B cell (primary cell): ENCODE measurements at regions of chr12 and their contacts with region 1.

Region 1: GRCh38 chr12:26274441-26275312 is 79.3 kb downstream of the SSPN start:
- DNase-seq: peak; percentile 58
- ATAC-seq: peak; percentile 96
- H3K4me3 ChIP-seq: no peak overlapping the region
- H3K4me3 Mint-ChIP-seq: peak overlapping the region; percentile 18
- H3K27ac ChIP-seq: no peak overlapping the region
- H3K27ac Mint-ChIP-seq: peak overlapping the region; percentile 78
- H3K4me1 ChIP-seq: peaks cover 16 to 28% of the 10 kb centered on the region in 2 donors
- H3K4me1 Mint-ChIP-seq: peaks cover 43% of the 10 kb centered on the region
- H3K27me3 ChIP-seq: no peaks in the 10 kb centered on the region
- H3K27me3 Mint-ChIP-seq: no peaks in the 10 kb centered on the region
- CTCF ChIP-seq: no peak

Region 2: GRCh38 chr12:26113853-26114719 is 160.6 kb before region 1 on chr12:
- CTCF ChIA-PET with region 1: interaction called, 12 read pairs
- POLR2A ChIA-PET with region 1: interaction called, 3 read pairs
- intact Hi-C with region 1: loop called (anchors 1 kb)
- DNase-seq: peak; percentile 94
- ATAC-seq: peak; percentile 80
- H3K4me3 ChIP-seq: peak overlapping the region in 4 of 5 experiments; percentile 67 to 80 (median 70)
- H3K4me3 Mint-ChIP-seq: peak overlapping the region; percentile 87
- H3K27ac ChIP-seq: peak overlapping the region; percentile 91 to 95
- H3K27ac Mint-ChIP-seq: peak overlapping the region; percentile 75
- H3K4me1 ChIP-seq: peaks cover 36 to 47% of the 10 kb centered on the region in 2 donors
- H3K4me1 Mint-ChIP-seq: peaks cover 49% of the 10 kb centered on the region
- H3K27me3 ChIP-seq: no peaks in the 10 kb centered on the region
- H3K27me3 Mint-ChIP-seq: no peaks in the 10 kb centered on the region
- CTCF ChIP-seq: peak; percentile 48

Region 3: GRCh38 chr12:26204612-26205289 is 69.9 kb before region 1 on chr12:
- CTCF ChIA-PET with region 1: no interaction called
- POLR2A ChIA-PET with region 1: no interaction called
- intact Hi-C with region 1: no loop called
- DNase-seq: no peak
- ATAC-seq: no peak
- H3K4me3 ChIP-seq: no peak overlapping the region
- H3K4me3 Mint-ChIP-seq: no peak overlapping the region
- H3K27ac ChIP-seq: no peak overlapping the region
- H3K27ac Mint-ChIP-seq: no peak overlapping the region
- H3K4me1 ChIP-seq: no peaks in the 10 kb centered on the region
- H3K4me1 Mint-ChIP-seq: peaks cover 7% of the 10 kb centered on the region
- H3K27me3 ChIP-seq: no peaks in the 10 kb centered on the region
- H3K27me3 Mint-ChIP-seq: no peaks in the 10 kb centered on the region
- CTCF ChIP-seq: no peak

Region 4: DNA sequence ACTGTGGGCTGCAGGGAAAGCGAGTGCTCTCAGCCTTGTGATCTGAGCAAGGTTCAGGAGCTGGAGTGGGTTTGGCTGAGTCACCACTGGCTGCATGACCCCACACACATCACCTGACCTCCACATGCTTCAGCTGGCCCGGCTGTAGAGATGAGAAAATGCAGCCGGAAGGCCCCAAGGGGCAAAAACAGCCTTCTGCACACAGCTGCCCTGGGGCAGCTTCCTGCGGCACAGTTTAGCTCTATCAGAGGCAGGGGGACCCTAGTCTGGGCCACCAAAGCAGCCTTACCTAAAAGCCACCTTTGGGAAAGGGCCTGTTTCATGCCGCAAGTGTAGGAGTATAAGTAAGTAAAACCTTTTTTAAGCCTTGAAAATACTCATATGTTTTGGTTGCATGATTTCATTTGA is 44.0 kb after region 1 on chr12:
- CTCF ChIA-PET with region 1: interaction called, 3 read pairs
- POLR2A ChIA-PET with region 1: no interaction called
- intact Hi-C with region 1: loop called (anchors 1 kb)
- DNase-seq: peak; percentile 48
- ATAC-seq: peak; percentile 86
- H3K4me3 ChIP-seq: no peak overlapping the region
- H3K4me3 Mint-ChIP-seq: peak overlapping the region; percentile 71
- H3K27ac ChIP-seq: peak overlapping the region in 1 of 2 donors; percentile 14
- H3K27ac Mint-ChIP-seq: peak overlapping the region; percentile 88
- H3K4me1 ChIP-seq: peaks cover 20 to 30% of the 10 kb centered on the region in 2 donors
- H3K4me1 Mint-ChIP-seq: peaks cover 35% of the 10 kb centered on the region
- H3K27me3 ChIP-seq: no peaks in the 10 kb centered on the region
- H3K27me3 Mint-ChIP-seq: no peaks in the 10 kb centered on the region
- CTCF ChIP-seq: no peak

Region 5: DNA sequence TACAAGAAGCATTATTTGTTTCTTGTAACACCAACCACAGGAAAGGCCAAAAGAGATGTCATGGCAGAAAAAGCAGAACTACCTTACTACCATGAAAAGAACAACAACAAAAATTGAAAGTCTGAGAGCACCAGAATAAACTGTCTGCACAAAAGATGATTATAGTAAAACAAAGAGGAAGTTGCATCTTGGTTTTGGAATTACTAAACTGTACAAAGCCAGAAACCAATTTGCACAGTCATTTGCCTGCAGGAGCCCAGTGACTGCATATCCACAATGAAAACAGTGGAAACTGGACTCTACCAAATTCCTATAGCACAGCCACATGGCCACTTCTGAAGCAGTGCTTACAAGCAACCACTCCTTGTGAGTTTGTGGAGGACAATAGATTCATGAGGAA is 196.9 kb after region 1 on chr12:
- CTCF ChIA-PET with region 1: no interaction called
- POLR2A ChIA-PET with region 1: no interaction called
- intact Hi-C with region 1: loop called (anchors 2 kb)
- DNase-seq: peak; percentile 69
- ATAC-seq: peak; percentile 70
- H3K4me3 ChIP-seq: peak overlapping the region in 1 of 5 experiments; percentile 8
- H3K4me3 Mint-ChIP-seq: peak overlapping the region; percentile 36
- H3K27ac ChIP-seq: peak overlapping the region; percentile 39 to 63
- H3K27ac Mint-ChIP-seq: peak overlapping the region; percentile 78
- H3K4me1 ChIP-seq: peaks cover 30 to 38% of the 10 kb centered on the region in 2 donors
- H3K4me1 Mint-ChIP-seq: peaks cover 47% of the 10 kb centered on the region
- H3K27me3 ChIP-seq: no peaks in the 10 kb centered on the region
- H3K27me3 Mint-ChIP-seq: no peaks in the 10 kb centered on the region
- CTCF ChIP-seq: no peak